ENCODE measurements at regions of chr6 and their contacts with region 1.

Region 1: DNA sequence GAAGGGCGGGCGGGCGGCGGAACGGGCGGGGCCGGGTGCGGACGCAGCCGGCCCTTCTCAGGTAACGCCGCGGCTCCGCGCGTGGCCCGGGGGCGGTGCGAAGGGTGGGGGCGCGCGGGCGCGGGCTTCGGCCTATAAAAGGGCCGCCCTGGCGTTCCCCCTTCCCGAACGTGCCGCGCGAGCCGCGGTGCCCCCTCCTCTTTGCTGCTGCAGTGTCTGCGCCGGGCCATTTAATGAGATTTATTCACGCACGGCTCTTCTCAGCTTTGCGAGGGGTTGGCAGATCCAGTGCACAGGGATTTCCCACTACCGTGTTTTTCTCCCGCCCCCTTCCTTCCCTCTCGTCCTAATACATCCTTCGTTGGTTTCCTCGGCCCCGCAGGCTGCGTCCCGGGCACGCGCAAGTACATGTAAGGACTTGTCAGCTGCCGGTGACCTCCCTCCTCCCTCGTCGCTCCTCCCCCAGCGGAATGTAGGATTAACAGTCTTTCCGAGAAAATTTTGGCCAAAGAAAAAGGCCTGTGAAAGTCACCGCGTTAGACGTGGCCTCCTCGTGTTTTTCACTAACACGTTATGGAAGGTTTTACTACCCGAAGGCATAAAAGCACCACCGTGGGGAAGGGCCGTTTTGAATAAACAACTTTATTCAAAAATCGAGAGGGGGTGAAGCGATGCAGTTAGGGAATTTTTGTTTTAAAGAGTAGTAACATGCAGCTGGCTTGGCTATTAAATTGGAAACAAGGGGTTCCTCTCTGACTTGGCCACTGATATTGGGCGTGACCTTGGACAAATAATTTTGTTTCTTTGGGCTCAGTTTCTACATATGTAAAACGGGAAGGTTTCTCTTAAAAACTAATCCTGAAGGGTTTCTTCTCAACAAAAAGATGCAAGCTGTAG is 966 bp upstream of the REV3L start:
- DNase-seq: peak; percentile 89 to 92
- ATAC-seq: peak; percentile 57 to 68
- H3K4me3 ChIP-seq: peak overlapping the region; percentile 79 to 96 (median 88)
- H3K27ac ChIP-seq: peak overlapping the region; percentile 95 to 100 (median 99)
- H3K4me1 ChIP-seq: peaks cover 38 to 41% of the 10 kb centered on the region in 2 donors
- H3K27me3 ChIP-seq: no peaks in the 10 kb centered on the region
- CTCF ChIP-seq: no peak
- POLR2A ChIP-seq: peak; percentile 93 to 98

Region 2: DNA sequence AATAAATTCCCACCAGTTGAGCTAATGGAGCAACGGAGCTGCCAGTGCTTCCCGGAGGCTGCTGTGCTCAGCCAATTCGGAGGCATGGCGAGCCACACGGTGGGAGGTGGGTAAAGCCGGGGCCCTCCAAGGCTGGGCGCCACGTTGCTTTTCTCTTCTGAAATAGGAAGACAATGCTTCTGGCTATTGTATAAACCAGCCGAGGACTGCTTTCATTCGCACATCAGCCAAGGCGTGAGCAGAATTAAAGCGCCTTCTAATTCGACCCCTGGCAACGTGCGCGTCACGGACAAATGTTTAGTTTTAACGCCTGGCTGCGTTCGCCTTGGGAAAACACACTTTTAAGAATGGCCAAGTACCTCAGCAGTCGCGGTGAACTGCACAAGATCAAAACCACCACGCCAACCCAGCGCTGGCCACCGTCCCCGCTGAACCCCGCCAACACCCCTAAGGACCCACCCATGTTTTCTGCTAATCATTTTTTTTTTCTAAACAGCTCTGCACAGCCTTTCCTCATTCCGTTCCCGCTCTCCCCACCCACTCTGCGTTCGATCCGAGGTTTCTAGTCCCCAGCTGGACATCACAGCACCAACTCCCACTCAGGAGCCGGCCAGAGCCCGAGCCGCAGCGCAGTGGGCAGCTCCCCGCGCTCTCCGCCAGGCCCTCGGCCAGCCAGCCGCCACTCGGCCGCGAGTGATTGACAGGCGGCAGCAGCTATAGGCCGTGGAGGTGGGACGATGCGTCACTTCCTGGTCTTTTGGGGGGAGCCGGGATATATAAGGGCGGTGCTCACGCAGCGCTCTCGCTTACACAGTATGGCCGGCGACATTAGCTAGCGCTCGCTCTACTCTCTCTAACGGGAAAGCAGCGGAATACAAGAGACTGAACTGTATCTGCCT is 609.8 kb before region 1 on chr6 and contains the start of gene AMD1:
- in situ Hi-C with region 1: no loop called
- intact Hi-C with region 1: loop called (anchors 10 kb)
- DNase-seq: peak; percentile 98
- ATAC-seq: peak; percentile 71 to 79
- H3K4me3 ChIP-seq: peak within 1 kb of the TSS; percentile 79 to 94 (median 87)
- H3K27ac ChIP-seq: peak within 1 kb of the TSS; percentile 92 to 97 (median 96)
- H3K4me1 ChIP-seq: peaks cover 24 to 29% of the 10 kb centered on the region in 2 donors
- H3K27me3 ChIP-seq: no peaks in the 10 kb centered on the region
- CTCF ChIP-seq: no peak
- POLR2A ChIP-seq: peak; percentile 99
- total RNA-seq, gene AMD1: 33.5 to 57.1 (median 45.1) TPM

Region 3: GRCh38 chr6:111534231-111534751 is 50.3 kb after region 1 on chr6:
- in situ Hi-C with region 1: no loop called
- intact Hi-C with region 1: loop called (anchors 2 kb)
- DNase-seq: peak; percentile 90 to 95
- ATAC-seq: peak; percentile 96 to 97
- H3K4me3 ChIP-seq: peak overlapping the region in 1 of 4 donors; percentile 10
- H3K27ac ChIP-seq: peak overlapping the region; percentile 80 to 90 (median 84)
- H3K4me1 ChIP-seq: peaks cover 31 to 54% of the 10 kb centered on the region in 2 donors
- H3K27me3 ChIP-seq: no peaks in the 10 kb centered on the region
- CTCF ChIP-seq: no peak
- POLR2A ChIP-seq: peak in 1 of 2 donors; percentile 21

Region 4: GRCh38 chr6:111605100-111605751 is 121.2 kb after region 1 on chr6:
- in situ Hi-C with region 1: loop called in 1 of 4 experiments (anchors 10 kb)
- intact Hi-C with region 1: loop called (anchors 1 kb)
- DNase-seq: peak; percentile 80 to 92
- ATAC-seq: peak; percentile 58 to 61
- H3K4me3 ChIP-seq: peak overlapping the region; percentile 67 to 91 (median 72)
- H3K27ac ChIP-seq: peak overlapping the region; percentile 92 to 99 (median 97)
- H3K4me1 ChIP-seq: peaks cover 45 to 53% of the 10 kb centered on the region in 2 donors
- H3K27me3 ChIP-seq: no peaks in the 10 kb centered on the region
- CTCF ChIP-seq: no peak
- POLR2A ChIP-seq: peak; percentile 51 to 75

Region 5: GRCh38 chr6:111642463-111643158 is 158.6 kb after region 1 on chr6:
- in situ Hi-C with region 1: no loop called
- intact Hi-C with region 1: loop called (anchors 1 kb)
- DNase-seq: peak in 1 of 2 donors; percentile 75
- ATAC-seq: peak; percentile 63 to 79
- H3K4me3 ChIP-seq: peak overlapping the region in 2 of 4 donors; percentile 3 to 8
- H3K27ac ChIP-seq: peak overlapping the region in 1 of 4 donors; percentile 29
- H3K4me1 ChIP-seq: peaks cover 15 to 21% of the 10 kb centered on the region in 2 donors
- H3K27me3 ChIP-seq: no peaks in the 10 kb centered on the region
- CTCF ChIP-seq: peak; percentile 53 to 72 (median 62)
- POLR2A ChIP-seq: no peak

Region 6: GRCh38 chr6:111873178-111874024 is 389.4 kb after region 1 on chr6 and contains the start of gene FYN:
- in situ Hi-C with region 1: no loop called
- intact Hi-C with region 1: loop called (anchors 10 kb)
- DNase-seq: peak; percentile 93 to 96
- ATAC-seq: peak; percentile 95 to 98
- H3K4me3 ChIP-seq: peak within 1 kb of the TSS; percentile 46 to 72 (median 62)
- H3K27ac ChIP-seq: peak within 1 kb of the TSS; percentile 36 to 79 (median 72)
- H3K4me1 ChIP-seq: peaks cover 4 to 5% of the 10 kb centered on the region in 2 donors
- H3K27me3 ChIP-seq: peaks cover 0 to 35% (median 15%) of the 10 kb centered on the region in 3 donors
- CTCF ChIP-seq: peak; percentile 51 to 64 (median 53)
- POLR2A ChIP-seq: peak; percentile 67 to 88
- total RNA-seq, gene FYN: 9.2 to 36.8 (median 17.0) TPM